HepG2 (cell line): ENCODE measurements at regions of chr18 and their contacts with region 1.

Region 1: DNA sequence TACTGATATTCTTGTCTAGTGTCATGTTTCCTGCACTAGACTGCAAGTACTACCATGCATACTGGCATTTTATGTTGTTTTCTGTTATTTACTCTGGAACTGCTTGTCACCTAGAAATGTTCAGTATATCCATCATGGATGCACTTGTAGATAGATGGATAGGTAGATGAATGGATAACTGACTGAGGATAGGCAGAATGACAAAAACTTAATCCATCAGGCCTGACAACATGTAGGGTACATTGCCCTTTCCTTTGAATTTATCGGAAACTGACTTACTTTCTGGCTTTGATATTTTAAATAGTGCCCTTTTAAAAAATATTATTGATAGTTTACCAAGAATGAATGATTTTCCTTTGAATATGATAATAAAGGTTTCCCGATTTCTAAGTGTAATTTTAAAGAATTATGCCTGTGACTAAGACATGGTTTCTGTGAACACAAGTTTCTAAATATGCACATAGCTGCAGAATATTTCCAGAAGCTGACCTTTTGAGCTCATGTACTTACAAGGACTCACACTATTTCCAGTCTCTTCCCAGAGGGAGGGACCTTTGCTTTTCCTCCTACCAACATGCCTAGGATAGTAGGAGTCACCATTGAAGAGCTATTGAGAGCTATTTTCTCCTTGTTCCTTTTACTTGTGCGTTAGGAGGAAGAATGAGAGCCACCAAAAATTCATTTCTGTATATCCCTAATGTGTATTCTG is 81.3 kb downstream of the ANKRD12 start:
- DNase-seq: no peak
- ATAC-seq: no peak
- H3K4me3 ChIP-seq: no peak overlapping the region
- H3K27ac ChIP-seq: no peak overlapping the region
- H3K4me1 ChIP-seq: peaks cover 34% of the 10 kb centered on the region
- H3K27me3 ChIP-seq: no peaks in the 10 kb centered on the region
- CTCF ChIP-seq: no peak
- EP300 ChIP-seq: no peak
- POLR2A ChIP-seq: no peak
- RAD21 ChIP-seq: no peak

Region 2: GRCh38 chr18:9184998-9185613 is 32.8 kb before region 1 on chr18:
- CTCF ChIA-PET with region 1: no interaction called
- POLR2A ChIA-PET with region 1: no interaction called
- in situ Hi-C with region 1: no loop called
- intact Hi-C with region 1: loop called (anchors 5 kb)
- DNase-seq: no peak
- ATAC-seq: no peak
- H3K4me3 ChIP-seq: no peak overlapping the region
- H3K27ac ChIP-seq: no peak overlapping the region
- H3K4me1 ChIP-seq: peaks cover 6% of the 10 kb centered on the region; the same call in 1 of the 2 replicates
- H3K27me3 ChIP-seq: no peaks in the 10 kb centered on the region
- CTCF ChIP-seq: no peak
- EP300 ChIP-seq: no peak
- POLR2A ChIP-seq: no peak
- RAD21 ChIP-seq: no peak